Activated T-helper 1 cell treated with anti-CD3 and anti-CD28 coated beads, Interleukin-12 subunit alpha, Interleukin-12 subunit beta, Interleukin-2, Interleukin-4 antibody, amounts not matched to agents 30 ng/mL and 10 ng/mL and 1 ng/mL, durations not matched to agents 14 hours and 24 hours and 36 hours (primary cell): ENCODE measurements at regions of chr5 and their contacts with region 1.

Region 1: DNA sequence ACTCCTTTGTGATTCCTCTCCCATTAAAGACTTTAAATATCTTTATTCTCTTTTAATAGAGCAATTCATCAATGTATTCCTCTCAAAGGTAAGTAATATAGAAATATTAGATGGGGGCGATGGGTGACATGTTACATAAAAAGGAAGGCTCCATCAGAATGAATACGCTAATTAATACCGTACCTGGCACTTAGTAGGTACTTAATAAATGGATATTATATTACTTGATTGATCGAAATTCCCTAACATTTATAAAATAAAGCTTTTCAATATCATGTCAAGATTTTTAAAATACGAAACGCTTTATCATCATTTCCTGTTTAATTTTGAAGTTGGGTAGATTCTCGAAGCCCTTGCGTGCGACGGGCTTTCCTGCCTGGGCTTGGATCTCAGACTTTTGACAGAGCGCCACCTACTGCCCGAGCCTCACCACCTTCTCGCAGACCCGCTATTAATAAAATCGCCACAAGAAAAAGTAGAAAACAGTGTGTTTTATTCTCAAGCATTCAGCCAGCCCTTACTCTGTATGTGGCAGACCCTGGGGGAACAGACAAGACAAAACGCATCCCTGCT is 99.4 kb downstream of the C5orf15 start:
- DNase-seq: peak; percentile 57
- H3K4me3 Mint-ChIP-seq: no peak overlapping the region
- H3K27ac Mint-ChIP-seq: peak overlapping the region; percentile 35
- H3K4me1 Mint-ChIP-seq: peaks cover 28% of the 10 kb centered on the region
- H3K27me3 Mint-ChIP-seq: no peaks in the 10 kb centered on the region

Region 2: GRCh38 chr5:133423618-133424282 is 445.3 kb before region 1 on chr5:
- intact Hi-C with region 1: loop called (anchors 2 kb)
- DNase-seq: peak; percentile 52
- H3K4me3 Mint-ChIP-seq: no peak overlapping the region
- H3K27ac Mint-ChIP-seq: no peak overlapping the region
- H3K4me1 Mint-ChIP-seq: peaks cover 10% of the 10 kb centered on the region
- H3K27me3 Mint-ChIP-seq: peaks cover 14% of the 10 kb centered on the region

Region 3: DNA sequence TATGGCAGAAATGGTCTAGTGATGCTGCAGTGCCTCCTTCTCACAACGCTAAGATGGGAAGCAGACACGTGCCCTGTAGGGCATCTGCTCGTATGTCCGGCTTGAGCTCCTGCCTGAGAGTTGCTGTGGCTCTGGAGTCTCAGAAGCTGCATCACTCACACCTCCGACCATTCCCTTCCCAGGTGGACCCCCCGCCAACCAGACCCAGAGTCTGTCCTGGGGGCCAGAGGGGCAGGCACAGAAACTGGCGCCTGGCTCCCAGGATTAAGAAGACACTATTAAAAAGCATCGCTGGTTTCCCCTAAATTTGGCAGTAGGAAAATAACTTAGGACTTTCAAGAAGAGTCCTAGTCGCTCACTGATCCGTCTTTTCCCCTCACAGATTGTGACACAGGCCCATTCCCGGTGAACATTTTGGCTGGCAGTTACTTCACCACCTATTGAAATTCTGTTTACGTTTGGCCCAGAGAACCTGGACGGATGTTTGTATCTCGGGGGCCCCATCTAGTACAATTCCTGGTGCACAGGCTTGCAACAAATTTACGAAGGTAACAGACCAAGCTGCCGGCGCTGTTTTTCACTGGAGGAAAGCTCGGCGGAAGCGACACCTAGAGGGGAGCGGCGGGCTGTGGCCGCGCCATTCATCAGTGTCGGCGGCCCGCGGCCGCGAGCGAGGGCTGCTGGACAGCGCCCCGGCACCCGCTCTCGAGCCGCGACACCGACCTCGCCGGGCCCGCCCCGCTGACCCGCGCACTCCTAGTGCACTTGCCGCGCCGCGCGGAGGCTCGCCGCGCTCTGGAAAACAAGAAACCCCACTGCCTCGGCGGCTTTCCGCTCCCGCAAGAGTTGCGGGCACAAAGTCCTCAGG is 258.3 kb before region 1 on chr5:
- intact Hi-C with region 1: loop called (anchors 10 kb)
- DNase-seq: no peak
- H3K4me3 Mint-ChIP-seq: no peak overlapping the region
- H3K27ac Mint-ChIP-seq: no peak overlapping the region
- H3K4me1 Mint-ChIP-seq: peaks cover 4% of the 10 kb centered on the region
- H3K27me3 Mint-ChIP-seq: peaks cover 71% of the 10 kb centered on the region

Region 4: GRCh38 chr5:133754575-133755169 is 114.4 kb before region 1 on chr5:
- intact Hi-C with region 1: loop called (anchors 1 kb)
- DNase-seq: no peak
- H3K4me3 Mint-ChIP-seq: no peak overlapping the region
- H3K27ac Mint-ChIP-seq: no peak overlapping the region
- H3K4me1 Mint-ChIP-seq: no peaks in the 10 kb centered on the region
- H3K27me3 Mint-ChIP-seq: peaks cover 20% of the 10 kb centered on the region

Region 5: GRCh38 chr5:133884569-133885311 is 15.7 kb after region 1 on chr5:
- intact Hi-C with region 1: no loop called
- DNase-seq: no peak
- H3K4me3 Mint-ChIP-seq: no peak overlapping the region
- H3K27ac Mint-ChIP-seq: no peak overlapping the region
- H3K4me1 Mint-ChIP-seq: no peaks in the 10 kb centered on the region
- H3K27me3 Mint-ChIP-seq: peaks cover 6% of the 10 kb centered on the region

Region 6: DNA sequence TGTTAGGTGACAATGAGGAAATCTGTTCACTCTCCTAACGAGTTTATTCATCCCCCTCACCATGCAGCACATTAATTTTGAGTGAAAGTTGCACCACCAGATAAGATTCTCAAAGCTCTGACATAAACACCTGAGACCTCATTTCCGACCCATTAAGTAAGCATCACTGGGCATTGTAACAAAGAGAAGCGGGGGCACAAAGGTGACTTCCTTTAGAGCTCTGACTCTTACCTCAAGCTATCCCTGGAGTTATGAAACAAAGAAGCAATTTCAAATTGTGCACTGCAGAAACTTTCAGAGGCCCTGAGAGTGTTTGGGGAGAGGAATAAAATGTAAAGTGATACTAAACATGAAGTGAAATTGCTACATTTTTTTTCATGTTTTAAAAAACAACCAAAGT is 69.9 kb after region 1 on chr5:
- intact Hi-C with region 1: loop called (anchors 1 kb)
- DNase-seq: no peak
- H3K4me3 Mint-ChIP-seq: no peak overlapping the region
- H3K27ac Mint-ChIP-seq: no peak overlapping the region
- H3K4me1 Mint-ChIP-seq: peaks cover 28% of the 10 kb centered on the region
- H3K27me3 Mint-ChIP-seq: peaks cover 1% of the 10 kb centered on the region

Region 7: DNA sequence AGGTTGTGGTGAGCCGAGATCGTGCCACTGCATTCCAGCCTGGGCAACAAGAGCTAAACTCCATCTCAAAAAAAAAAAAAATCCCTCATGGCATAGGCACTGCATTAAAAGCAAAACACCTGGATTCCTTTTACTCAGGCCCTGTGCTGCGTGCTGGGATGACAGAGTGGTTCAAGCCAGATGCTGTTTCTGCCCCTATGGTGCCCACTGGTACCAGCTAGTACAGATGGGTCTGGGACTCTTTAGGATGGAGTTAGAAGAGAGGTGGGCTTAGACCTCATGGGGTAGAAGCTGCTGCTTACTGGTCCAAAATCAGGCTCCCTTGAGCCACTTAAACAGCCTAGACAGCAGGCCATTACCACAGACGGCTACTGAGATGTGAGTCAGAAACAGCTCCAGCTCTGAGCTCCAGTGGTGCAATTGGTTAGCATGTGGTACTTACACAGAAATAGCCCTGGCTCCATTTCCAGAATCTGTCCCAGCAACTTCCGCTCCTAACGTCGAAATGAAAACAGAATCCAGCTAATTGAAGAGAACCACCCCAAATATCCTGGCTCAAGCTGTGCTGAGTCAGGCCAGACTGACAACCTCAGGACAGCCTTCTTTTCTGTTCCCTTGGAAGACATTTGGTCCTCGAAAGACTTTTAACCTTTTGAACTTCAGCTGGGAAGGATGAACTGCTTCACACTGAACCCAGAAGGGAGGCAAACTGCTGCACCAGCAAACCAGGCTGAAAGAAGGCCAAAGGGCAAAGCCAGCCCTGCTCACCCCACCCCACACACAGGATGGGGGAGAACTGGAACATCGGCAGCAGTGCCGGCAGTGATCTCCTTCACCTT is 83.9 kb after region 1 on chr5:
- intact Hi-C with region 1: no loop called
- DNase-seq: no peak
- H3K4me3 Mint-ChIP-seq: no peak overlapping the region
- H3K27ac Mint-ChIP-seq: no peak overlapping the region
- H3K4me1 Mint-ChIP-seq: peaks cover 9% of the 10 kb centered on the region
- H3K27me3 Mint-ChIP-seq: no peaks in the 10 kb centered on the region

Region 8: DNA sequence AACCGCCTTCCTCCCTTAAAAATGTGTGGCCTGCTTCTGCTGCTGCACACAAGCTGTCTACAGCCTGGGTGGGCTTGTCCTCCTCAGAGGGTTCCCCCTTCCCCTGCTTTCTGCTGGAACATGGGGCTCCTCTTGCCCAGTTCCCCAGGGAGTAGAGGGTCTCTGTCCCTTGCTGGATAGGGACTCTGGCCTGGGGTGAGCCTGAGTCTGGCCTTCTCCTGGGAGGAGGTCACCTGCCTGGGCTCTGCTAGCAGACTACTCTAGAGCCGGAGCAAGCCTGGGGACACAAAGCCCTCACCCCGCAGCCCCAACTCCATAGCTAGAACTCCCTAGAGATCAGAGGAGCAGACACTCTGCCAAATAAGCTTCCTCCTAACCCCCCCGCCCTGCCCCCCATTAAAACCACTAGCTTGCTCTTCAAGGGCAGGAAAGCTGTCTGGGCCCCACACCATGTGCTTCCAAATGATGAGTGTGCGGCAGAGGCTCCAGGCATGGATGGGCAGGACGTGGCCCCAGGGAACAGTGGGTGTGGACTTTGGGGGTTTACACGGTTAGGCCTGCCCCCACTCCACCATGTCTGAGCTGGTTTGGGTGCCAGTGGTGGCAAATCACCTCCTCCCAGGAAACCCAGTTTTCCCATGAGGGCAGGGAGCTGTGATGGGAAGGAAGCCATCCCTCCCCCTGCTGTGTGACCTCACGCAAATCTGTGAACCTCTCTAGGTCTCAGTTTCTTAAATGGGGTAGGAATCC is 255.4 kb after region 1 on chr5:
- intact Hi-C with region 1: no loop called
- DNase-seq: no peak
- H3K4me3 Mint-ChIP-seq: peak overlapping the region; percentile 65
- H3K27ac Mint-ChIP-seq: peak overlapping the region; percentile 40
- H3K4me1 Mint-ChIP-seq: peaks cover 75% of the 10 kb centered on the region
- H3K27me3 Mint-ChIP-seq: peaks cover 21% of the 10 kb centered on the region

Region 9: GRCh38 chr5:134345996-134346395 is 477.0 kb after region 1 on chr5:
- intact Hi-C with region 1: no loop called
- DNase-seq: no peak
- H3K4me3 Mint-ChIP-seq: no peak overlapping the region
- H3K27ac Mint-ChIP-seq: no peak overlapping the region
- H3K4me1 Mint-ChIP-seq: no peaks in the 10 kb centered on the region
- H3K27me3 Mint-ChIP-seq: peaks cover 2% of the 10 kb centered on the region